ENCODE measurements at regions of chr19 and their contacts with region 1.

Region 1: DNA sequence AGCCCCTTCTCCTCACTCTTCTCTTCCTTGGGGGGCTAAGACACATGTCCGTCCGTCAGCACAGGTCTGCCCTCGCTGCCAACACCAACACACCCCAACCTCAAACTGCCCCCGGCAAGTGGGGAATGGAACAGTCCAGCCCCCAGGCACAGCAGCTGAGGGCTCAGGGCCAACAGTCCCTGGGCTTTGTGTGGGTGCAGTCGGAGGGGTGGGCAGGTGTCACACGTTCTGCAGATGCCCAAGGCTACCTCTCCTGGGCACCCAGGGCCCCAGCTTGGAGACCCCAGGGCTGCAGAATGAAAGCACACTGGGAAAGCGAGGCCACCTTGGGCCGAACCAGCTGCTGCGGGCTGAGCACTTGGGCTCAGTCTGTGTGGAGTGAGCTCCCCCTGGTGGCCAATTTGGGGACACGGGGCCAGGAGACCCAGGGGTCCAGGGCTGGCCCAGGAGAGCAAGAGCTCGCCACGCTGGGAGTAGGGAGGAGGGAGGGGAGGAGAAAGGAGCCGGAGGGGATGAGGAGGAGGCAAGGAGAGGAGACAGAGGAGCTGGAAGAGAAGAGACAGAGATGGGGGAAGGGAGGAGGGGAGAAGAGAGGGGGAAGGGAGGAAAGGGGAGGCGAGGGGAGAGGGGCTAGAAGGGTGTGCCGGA is 14.0 kb upstream of the ATP8B3 start:
- DNase-seq: peak; percentile 56 to 97
- H3K4me3 ChIP-seq: no peak overlapping the region
- H3K27ac ChIP-seq: 0 out of 2 replicates have a peak overlapping the region, but pooled peaks have one; percentile 34
- H3K4me1 ChIP-seq: peaks cover 0 to 14% (median 8%) of the 10 kb centered on the region in 4 experiments; a peak in 6 of 7 replicates
- H3K27me3 ChIP-seq: no peaks in the 10 kb centered on the region
- CTCF ChIP-seq: peak; percentile 91 to 95 (median 93)
- EP300 ChIP-seq: no peak
- POLR2A ChIP-seq: no peak
- RAD21 ChIP-seq: peak; percentile 84 to 90

Region 2: GRCh38 chr19:1774999-1775772 is 50.8 kb before region 1 on chr19:
- CTCF ChIA-PET with region 1: interaction called, 34 read pairs
- POLR2A ChIA-PET with region 1: no interaction called
- DNase-seq: peak; percentile 72 to 92
- H3K4me3 ChIP-seq: peak overlapping the region; percentile 7 to 56 (median 8); a peak in 4 of 8 replicates
- H3K27ac ChIP-seq: no peak overlapping the region
- H3K4me1 ChIP-seq: peaks cover 0 to 4% (median 1%) of the 10 kb centered on the region in 4 experiments; a peak in 3 of 7 replicates
- H3K27me3 ChIP-seq: peaks cover 24 to 72% (median 65%) of the 10 kb centered on the region in 4 experiments
- CTCF ChIP-seq: peak; percentile 85 to 95 (median 88)
- EP300 ChIP-seq: no peak
- POLR2A ChIP-seq: no peak
- RAD21 ChIP-seq: peak; percentile 55 to 71

Region 3: GRCh38 chr19:1789261-1790041 is 36.6 kb before region 1 on chr19:
- CTCF ChIA-PET with region 1: interaction called, 85 read pairs
- POLR2A ChIA-PET with region 1: no interaction called
- DNase-seq: no peak
- H3K4me3 ChIP-seq: peak overlapping the region; percentile 7 to 58 (median 32); a peak in 5 of 8 replicates
- H3K27ac ChIP-seq: no peak overlapping the region
- H3K4me1 ChIP-seq: peaks cover 0 to 8% (median 4%) of the 10 kb centered on the region in 4 experiments; a peak in 5 of 7 replicates
- H3K27me3 ChIP-seq: peaks cover 2 to 17% (median 13%) of the 10 kb centered on the region in 4 experiments; a peak in 6 of 7 replicates
- CTCF ChIP-seq: no peak
- EP300 ChIP-seq: no peak
- POLR2A ChIP-seq: no peak
- RAD21 ChIP-seq: no peak

Region 4: GRCh38 chr19:1812469-1813196 is 13.4 kb before region 1 on chr19:
- CTCF ChIA-PET with region 1: interaction called, 48 read pairs
- POLR2A ChIA-PET with region 1: interaction called, 3 read pairs
- DNase-seq: peak; percentile 93 to 95
- H3K4me3 ChIP-seq: peak overlapping the region; percentile 49 to 69 (median 56)
- H3K27ac ChIP-seq: no peak overlapping the region; the same call in 1 of the 2 replicates
- H3K4me1 ChIP-seq: peaks cover 0 to 2% (median 0%) of the 10 kb centered on the region in 4 experiments; a peak in 3 of 7 replicates
- H3K27me3 ChIP-seq: peaks cover 0 to 3% (median 0%) of the 10 kb centered on the region in 4 experiments; a peak in 3 of 7 replicates
- CTCF ChIP-seq: peak; percentile 80 to 93 (median 84)
- EP300 ChIP-seq: no peak
- POLR2A ChIP-seq: peak in 1 of 2 experiments; percentile 9; a peak in 1 of 3 replicates
- RAD21 ChIP-seq: peak; percentile 86 to 88

Region 5: GRCh38 chr19:1848399-1849131 is 22.5 kb after region 1 on chr19 and contains the start of gene REXO1:
- CTCF ChIA-PET with region 1: interaction called, 228 read pairs
- POLR2A ChIA-PET with region 1: interaction called, 5 read pairs
- DNase-seq: peak; percentile 84 to 99
- H3K4me3 ChIP-seq: peak within 1 kb of the TSS; percentile 75 to 95 (median 88)
- H3K27ac ChIP-seq: peak within 1 kb of the TSS; percentile 100
- H3K4me1 ChIP-seq: peaks cover 0 to 17% (median 13%) of the 10 kb centered on the region in 4 experiments; a peak in 6 of 7 replicates
- H3K27me3 ChIP-seq: no peaks in the 10 kb centered on the region
- CTCF ChIP-seq: peak; percentile 80 to 89 (median 84)
- EP300 ChIP-seq: peak in 1 of 2 experiments; percentile 6; a peak in 1 of 3 replicates
- POLR2A ChIP-seq: peak in 1 of 2 experiments; percentile 92; a peak in 2 of 3 replicates
- RAD21 ChIP-seq: peak; percentile 23 to 35; a peak in 2 of 4 replicates
- total RNA-seq, gene REXO1: 42.4 and 44.3 TPM in 2 replicates

Region 6: DNA sequence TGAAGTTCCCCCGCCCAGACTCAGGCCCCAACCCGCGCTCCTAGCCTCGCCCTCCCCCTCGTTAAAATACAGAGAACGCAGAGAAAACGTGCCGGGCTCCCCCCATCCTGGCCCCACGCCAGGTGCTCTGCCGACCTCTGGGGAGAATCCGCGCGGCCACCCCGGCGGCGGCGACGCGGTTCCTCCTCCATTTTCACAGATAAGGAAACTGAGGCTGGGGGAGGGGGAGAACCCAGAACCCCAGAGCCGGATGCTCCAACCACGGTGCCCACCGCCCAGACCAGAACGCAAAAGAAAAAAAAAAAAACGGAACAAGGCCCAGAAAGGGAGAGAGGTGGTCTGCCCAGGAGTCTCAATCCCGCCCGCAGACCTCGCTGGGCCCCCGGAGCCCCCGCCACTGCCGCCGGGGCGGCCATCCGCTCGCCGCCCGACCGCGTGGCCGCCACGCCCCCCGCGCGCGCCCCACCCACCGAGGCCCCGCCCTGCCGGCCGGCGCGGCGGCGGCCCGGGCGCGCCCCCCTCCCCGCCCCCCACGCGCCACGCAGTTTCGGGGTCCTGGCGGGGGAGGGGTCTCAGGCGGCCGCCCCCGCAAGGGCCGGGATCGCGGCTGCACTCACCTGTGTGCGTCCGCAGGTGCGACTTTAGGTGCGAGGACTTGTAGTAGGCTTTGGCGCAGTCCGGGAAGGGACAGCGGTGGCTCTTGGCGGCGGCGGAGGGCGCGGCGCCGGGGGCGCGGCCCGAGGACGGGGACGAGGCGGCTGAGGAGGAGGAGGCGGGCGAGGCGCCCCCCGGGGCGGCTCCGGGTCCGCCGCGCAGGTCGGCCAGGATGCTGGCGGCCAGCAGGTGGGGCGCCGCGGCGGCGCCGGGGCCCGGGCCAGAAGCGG is 36.6 kb after region 1 on chr19:
- CTCF ChIA-PET with region 1: no interaction called
- POLR2A ChIA-PET with region 1: no interaction called
- DNase-seq: peak in 1 of 2 experiments; percentile 73
- H3K4me3 ChIP-seq: peak overlapping the region; percentile 66 to 84 (median 78)
- H3K27ac ChIP-seq: no peak overlapping the region
- H3K4me1 ChIP-seq: peaks cover 0 to 47% (median 33%) of the 10 kb centered on the region in 4 experiments; a peak in 6 of 7 replicates
- H3K27me3 ChIP-seq: peaks cover 0 to 15% (median 6%) of the 10 kb centered on the region in 4 experiments; a peak in 5 of 7 replicates
- CTCF ChIP-seq: no peak
- EP300 ChIP-seq: no peak
- POLR2A ChIP-seq: no peak
- RAD21 ChIP-seq: no peak

Measured in H1 (cell line).